ENCODE measurements at regions of chr19 and their contacts with region 1.

Region 1: GRCh38 chr19:53867225-53868090 is at the start of gene MYADM:
- DNase-seq: peak; percentile 99
- ATAC-seq: peak; percentile 71
- H3K4me3 Mint-ChIP-seq: peak within 1 kb of the TSS; percentile 91
- H3K27ac Mint-ChIP-seq: peak within 1 kb of the TSS; percentile 88
- H3K4me1 Mint-ChIP-seq: peaks cover 32% of the 10 kb centered on the region
- H3K27me3 Mint-ChIP-seq: no peaks in the 10 kb centered on the region
- total RNA-seq, gene MYADM: 46.4 to 54.6 TPM

Region 2: DNA sequence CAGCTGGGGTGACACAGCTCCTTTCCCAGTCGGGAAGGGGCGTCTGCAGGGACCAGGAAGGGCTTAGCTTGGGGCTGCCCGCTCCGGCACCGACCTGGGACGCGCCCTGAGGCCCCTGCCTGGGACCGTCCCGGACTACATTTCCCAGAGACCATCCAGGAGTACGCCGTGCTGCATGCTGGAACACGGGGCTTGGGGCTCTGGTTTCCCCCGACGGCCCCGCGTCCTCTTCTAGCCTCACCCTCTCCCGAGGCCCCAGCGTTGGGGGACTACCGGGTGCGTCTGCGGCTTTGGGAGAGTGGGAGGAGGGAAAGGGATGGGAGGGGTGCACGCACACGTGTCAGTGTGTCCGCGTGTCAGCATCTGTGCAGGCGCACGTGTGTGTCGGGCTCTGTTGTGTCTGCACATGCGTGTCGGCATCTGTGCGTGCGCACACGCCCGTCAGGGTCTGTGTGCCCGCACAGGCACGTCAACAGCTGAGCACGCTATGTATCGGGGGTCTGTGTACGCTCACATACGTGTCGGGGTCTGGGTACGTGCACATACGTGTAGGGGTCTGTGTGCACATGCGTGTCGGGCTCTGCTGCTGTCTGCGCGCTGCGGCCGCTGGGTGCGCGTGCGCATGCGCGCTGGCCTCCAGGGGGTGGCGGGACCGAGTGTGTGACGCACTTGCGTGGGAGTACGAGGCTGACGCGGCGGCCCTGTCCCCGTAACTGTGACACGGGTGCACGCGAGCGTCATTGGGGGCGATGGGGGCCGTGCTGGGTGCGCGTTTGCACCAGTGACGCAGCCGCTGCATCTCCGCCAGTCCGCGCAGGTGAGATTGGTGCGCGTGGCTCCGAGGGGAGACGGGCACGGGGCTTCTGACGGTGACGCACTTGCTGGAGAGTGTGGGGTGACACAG is 329.7 kb before region 1 on chr19 and contains the start of gene ZNF331:
- CTCF ChIA-PET with region 1: no interaction called
- POLR2A ChIA-PET with region 1: no interaction called
- intact Hi-C with region 1: loop called in 1 of 2 experiments (anchors 5 kb)
- DNase-seq: peak; percentile 93
- ATAC-seq: peak; percentile 77
- H3K4me3 Mint-ChIP-seq: peak within 1 kb of the TSS; percentile 95
- H3K27ac Mint-ChIP-seq: peak within 1 kb of the TSS; percentile 98
- H3K4me1 Mint-ChIP-seq: peaks cover 33% of the 10 kb centered on the region
- H3K27me3 Mint-ChIP-seq: no peaks in the 10 kb centered on the region
- total RNA-seq, gene ZNF331: 24.3 to 29.7 TPM

Region 3: DNA sequence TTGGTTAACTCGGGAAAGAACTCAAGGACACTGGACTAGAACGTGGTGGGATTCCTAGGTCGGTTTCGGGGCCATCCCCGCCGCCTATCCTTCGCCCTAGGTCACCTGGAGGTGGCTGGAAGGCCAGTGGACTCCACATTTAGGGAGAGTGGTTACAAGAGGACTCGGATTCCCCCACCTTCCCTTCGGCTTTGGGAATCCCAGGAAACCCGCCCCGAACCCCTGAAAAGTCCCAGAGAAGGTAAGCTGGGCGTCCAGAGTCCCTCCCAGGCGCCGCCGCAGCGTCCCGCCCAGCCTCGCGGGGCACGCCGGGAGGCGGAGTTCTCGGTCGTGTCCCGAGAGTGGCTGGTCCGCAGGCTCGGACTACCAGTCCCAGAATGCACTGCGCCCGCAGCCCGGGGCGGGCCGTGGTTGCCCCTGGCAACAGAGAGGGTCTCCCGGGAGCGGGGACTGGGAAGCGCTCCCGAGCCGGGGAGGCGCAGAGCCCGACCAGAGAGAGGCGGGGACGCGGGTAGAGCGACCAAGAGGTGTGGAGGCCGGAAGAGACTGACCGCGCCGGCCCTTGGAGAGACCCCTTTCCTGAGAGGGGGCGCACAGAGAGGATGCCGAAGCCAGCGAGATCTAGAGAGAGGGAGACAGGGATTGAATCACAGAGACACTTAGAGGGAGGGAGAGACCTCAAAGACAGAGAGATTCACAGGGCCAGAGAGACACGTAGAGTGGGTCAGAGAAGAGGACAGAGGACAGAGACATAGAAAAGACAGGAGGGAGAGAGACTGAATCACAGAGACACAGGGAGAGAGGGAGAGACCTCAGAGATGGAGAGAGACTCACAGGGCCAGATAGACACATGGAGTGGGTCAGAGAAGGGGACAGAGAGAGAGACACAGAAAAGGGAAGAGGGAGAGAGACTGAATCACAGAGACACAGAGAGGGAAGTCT is 12.0 kb after region 1 on chr19:
- CTCF ChIA-PET with region 1: interaction called, 4 read pairs
- POLR2A ChIA-PET with region 1: interaction called, 5 read pairs
- intact Hi-C with region 1: loop called (anchors 1 to 2 kb)
- DNase-seq: peak; percentile 91
- ATAC-seq: peak; percentile 91
- H3K4me3 Mint-ChIP-seq: no peak overlapping the region
- H3K27ac Mint-ChIP-seq: peak overlapping the region; percentile 9
- H3K4me1 Mint-ChIP-seq: peaks cover 50% of the 10 kb centered on the region
- H3K27me3 Mint-ChIP-seq: peaks cover 11% of the 10 kb centered on the region

Region 4: GRCh38 chr19:53977429-53977990 is 110.1 kb after region 1 on chr19:
- CTCF ChIA-PET with region 1: no interaction called
- POLR2A ChIA-PET with region 1: no interaction called
- intact Hi-C with region 1: loop called in 1 of 2 experiments (anchors 1 kb)
- DNase-seq: peak; percentile 79
- ATAC-seq: peak; percentile 61
- H3K4me3 Mint-ChIP-seq: peak overlapping the region; percentile 59
- H3K27ac Mint-ChIP-seq: no peak overlapping the region
- H3K4me1 Mint-ChIP-seq: peaks cover 30% of the 10 kb centered on the region
- H3K27me3 Mint-ChIP-seq: peaks cover 53% of the 10 kb centered on the region

Region 5: DNA sequence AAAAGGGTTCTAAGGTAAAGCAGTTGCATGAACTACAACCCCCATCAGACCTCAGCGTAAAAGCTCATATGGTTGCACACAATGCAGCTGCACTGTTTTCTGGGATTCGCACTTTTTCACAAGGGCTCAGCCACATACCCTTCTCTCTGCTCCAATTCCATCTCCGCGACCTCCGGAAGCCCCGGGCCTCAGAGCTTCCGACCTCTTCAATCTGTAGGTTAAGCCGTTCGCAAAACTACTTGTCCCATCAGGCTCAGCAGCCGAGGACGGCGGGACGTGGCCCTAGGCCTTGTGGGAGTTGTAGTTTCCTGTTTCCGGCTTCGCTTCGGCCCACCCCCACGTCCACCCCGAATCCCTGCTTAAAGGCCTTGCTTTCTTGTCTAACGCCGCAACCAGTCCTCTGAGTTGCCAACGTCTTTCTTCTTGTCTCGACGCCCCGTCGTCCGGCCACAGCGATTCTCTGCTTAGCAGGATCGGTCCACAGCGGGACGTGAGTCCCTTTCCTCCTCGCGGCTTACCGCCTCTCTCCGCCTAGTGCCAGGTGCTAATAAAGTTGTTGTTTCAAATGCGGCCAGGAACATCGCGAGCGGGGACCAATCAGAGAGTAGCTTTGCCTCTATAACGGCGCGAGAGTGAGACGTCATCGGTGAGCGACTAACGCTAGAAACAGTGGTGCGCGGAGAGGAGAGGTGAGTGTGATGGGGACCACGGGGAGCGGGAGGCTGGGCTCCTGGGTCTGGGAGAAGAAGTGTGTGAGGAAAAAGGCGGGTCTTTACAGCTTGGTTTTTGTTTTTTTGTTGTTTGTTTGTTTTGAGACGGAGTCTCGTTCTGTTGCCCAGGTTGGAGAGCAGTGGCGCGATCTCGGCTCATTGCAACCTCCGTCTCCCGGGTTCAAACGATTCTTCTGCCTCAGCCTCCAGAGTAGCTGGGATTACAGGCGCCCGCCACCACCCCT is 247.9 kb after region 1 on chr19 and contains the starts of genes PRPF31 and TFPT:
- CTCF ChIA-PET with region 1: no interaction called
- POLR2A ChIA-PET with region 1: no interaction called
- intact Hi-C with region 1: loop called in 1 of 2 experiments (anchors 1 kb)
- DNase-seq: peak; percentile 97
- ATAC-seq: peak; percentile 94
- H3K4me3 Mint-ChIP-seq: peak within 1 kb of the TSS; percentile 83
- H3K27ac Mint-ChIP-seq: peak within 1 kb of the TSS; percentile 96
- H3K4me1 Mint-ChIP-seq: peaks cover 25% of the 10 kb centered on the region
- H3K27me3 Mint-ChIP-seq: no peaks in the 10 kb centered on the region
- total RNA-seq, gene PRPF31: 85.5 to 115 TPM
- total RNA-seq, gene TFPT: 28.5 to 39.3 TPM

Region 6: DNA sequence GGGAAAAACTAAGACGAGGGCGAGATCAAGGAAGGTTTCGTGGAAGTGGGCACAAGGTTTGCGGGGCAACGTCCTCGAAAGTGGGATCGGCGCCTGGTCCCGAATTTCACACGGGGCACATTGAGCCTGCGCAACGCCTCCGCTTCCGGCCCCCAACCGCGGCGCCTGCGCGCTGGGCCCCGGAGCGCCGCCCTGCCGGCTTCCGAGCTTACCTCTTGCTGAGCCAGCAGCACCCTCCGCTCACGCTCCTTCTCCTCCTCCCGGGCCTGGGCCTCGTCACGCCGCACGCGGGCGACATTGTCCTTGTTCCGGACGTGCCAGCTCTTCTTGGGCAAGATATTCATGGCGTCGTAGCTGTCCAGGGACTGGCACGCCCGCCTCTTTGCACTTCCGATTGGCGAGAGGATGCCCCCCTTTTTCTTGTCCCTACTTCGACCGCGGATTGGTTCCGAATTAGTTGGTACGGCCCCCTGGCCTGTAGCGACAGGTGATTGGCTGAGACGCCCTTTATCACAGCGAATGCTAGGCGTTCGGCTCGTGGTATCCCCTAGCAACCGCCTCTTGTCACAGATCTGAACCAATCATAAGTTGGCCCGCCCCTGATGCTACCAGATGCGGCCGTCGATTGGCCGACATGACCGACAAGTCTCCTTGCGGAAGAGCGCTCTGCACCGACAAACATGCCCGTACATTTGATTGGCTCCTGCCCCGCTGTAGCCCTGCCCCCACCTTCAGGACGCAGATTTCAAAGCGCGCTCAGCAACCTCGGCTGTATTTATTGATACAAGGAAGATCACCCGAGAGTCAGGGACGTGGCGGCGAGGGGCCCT is 292.1 kb after region 1 on chr19 and contains the start of gene LENG1:
- CTCF ChIA-PET with region 1: no interaction called
- POLR2A ChIA-PET with region 1: no interaction called
- intact Hi-C with region 1: loop called in 1 of 2 experiments (anchors 1 kb)
- DNase-seq: peak; percentile 99
- ATAC-seq: peak; percentile 90
- H3K4me3 Mint-ChIP-seq: peak within 1 kb of the TSS; percentile 87
- H3K27ac Mint-ChIP-seq: peak within 1 kb of the TSS; percentile 98
- H3K4me1 Mint-ChIP-seq: peaks cover 56% of the 10 kb centered on the region
- H3K27me3 Mint-ChIP-seq: peaks cover 7% of the 10 kb centered on the region
- total RNA-seq, gene LENG1: 3.5 to 3.6 TPM

Region 7: DNA sequence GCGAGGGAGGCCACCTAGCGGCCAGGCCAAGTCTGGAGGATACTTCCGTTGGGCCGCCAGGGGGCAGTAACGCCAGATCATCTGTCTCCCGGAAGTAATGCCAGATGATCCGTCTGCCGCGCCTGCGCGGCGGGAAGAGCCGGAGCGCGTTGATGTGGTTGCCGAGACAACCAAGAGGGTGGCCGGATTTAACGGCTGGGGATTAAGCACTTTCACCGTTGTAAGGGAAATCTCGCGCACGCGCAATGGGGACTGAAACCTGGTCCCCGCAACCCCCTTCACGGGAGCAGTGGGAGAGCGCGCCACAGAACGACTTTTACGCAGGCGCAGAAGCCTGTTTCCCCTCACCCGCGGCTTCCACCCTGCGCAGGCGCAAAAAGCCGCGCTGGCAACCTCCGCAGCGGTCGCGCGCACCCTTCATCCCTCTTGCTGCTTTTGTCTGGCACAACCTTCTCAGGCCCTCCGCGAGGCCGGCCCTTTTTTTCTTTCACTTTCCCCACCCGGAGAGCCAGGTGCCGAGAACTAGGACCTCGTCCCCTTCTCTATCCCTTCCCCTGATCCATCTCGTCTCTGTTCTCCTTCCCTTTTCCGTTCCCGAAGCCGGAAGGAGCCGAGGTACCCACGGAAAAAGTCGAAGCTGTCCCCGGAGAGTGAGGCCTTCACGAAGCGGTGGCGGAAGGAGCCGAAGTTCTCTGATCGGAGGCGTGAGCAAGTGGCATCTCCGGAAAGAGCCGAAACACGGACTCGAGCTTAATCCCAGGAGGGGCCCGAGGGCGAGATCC is 1786.5 kb after region 1 on chr19:
- CTCF ChIA-PET with region 1: no interaction called
- POLR2A ChIA-PET with region 1: interaction called, 3 read pairs
- intact Hi-C with region 1: loop called in 1 of 2 experiments (anchors 10 kb)
- DNase-seq: peak; percentile 99
- ATAC-seq: peak; percentile 84
- H3K4me3 Mint-ChIP-seq: peak overlapping the region; percentile 86
- H3K27ac Mint-ChIP-seq: peak overlapping the region; percentile 98
- H3K4me1 Mint-ChIP-seq: peaks cover 37% of the 10 kb centered on the region
- H3K27me3 Mint-ChIP-seq: no peaks in the 10 kb centered on the region

Measured in activated CD4-positive, alpha-beta T cell treated with anti-CD3 and anti-CD28 coated beads for 36 hours (primary cell).